GM10248 (cell line): ENCODE measurements at regions of chr12 and their contacts with region 1.

Region 1: GRCh38 chr12:67355578-67356379 is 86.6 kb downstream of the CAND1 start:
- DNase-seq: peak; percentile 28
- CTCF ChIP-seq: peak; percentile 39

Region 2: DNA sequence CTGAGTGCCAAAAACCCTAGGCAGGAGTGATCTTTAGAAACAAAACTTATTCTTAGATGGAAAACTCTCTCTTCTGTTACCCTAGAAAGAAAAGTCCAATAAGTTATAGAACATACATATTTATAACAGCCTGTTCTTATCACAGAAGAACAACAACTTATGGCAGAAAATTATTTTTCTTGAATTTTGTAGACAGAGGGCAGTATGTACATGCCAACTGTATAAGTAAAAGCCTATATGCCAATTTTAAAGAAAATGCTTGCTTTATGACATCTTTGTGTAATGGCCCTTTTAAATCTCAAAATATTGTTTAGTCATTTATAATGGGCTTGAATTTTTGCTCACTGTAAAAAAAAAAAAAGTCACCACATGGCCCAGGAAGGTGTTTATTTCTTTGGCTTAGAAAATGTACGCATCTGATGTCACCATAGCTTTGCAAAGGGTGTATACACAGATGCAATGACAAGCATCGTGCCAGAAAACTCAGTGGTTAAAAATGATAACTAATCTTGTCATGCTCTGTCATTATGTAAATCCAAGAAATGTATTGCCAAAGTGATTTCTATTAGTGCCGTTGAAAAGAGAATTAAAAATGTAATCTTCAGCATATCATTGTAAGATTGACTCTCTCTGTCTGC is 638.6 kb before region 1 on chr12:
- CTCF ChIA-PET with region 1: no interaction called
- POLR2A ChIA-PET with region 1: no interaction called
- DNase-seq: no peak
- CTCF ChIP-seq: no peak

Region 3: GRCh38 chr12:67413578-67413977 is 57.8 kb after region 1 on chr12:
- CTCF ChIA-PET with region 1: interaction called, 10 read pairs
- POLR2A ChIA-PET with region 1: no interaction called
- DNase-seq: no peak
- CTCF ChIP-seq: no peak

Region 4: GRCh38 chr12:67441736-67442346 is 86.1 kb after region 1 on chr12:
- CTCF ChIA-PET with region 1: interaction called, 12 read pairs
- POLR2A ChIA-PET with region 1: no interaction called
- DNase-seq: peak; percentile 63
- CTCF ChIP-seq: peak; percentile 70

Region 5: DNA sequence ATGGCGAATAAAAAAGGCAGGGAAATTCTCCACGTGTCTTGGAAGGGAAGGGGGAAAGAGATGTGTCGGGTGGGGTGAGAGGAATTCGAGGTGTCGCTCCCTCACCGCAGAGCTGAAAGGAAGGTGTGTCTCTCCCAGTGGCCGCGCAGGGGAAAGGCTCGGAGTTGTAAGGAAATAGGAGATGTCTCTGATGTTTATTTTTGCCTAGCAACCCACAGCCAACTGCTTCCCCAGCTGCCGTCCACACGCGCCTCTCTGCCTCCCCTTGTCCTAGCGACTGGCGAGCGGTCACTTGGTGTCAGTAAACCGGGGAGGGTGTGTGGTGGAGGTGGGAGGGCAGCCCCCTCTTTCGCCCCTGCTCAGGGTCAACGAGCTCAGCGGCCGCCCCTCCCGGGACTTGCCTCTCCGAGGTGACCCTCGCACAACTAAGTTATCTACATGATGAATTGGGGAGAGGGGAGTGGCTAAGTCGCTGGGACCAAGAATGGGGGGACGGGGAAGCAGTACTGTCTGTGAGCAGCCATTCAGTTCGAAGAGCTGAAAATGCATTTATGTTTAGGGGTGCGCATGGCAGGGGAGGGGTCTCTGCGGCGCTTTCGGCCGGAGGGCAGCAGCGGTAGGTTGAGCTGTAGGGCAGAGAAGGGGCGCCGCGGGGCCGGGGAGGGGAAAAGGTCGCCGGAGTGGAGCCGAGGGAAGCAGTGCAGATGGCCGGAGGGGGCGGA is 292.2 kb after region 1 on chr12:
- CTCF ChIA-PET with region 1: no interaction called
- POLR2A ChIA-PET with region 1: interaction called, 10 read pairs
- DNase-seq: peak; percentile 48
- CTCF ChIP-seq: no peak

Region 6: DNA sequence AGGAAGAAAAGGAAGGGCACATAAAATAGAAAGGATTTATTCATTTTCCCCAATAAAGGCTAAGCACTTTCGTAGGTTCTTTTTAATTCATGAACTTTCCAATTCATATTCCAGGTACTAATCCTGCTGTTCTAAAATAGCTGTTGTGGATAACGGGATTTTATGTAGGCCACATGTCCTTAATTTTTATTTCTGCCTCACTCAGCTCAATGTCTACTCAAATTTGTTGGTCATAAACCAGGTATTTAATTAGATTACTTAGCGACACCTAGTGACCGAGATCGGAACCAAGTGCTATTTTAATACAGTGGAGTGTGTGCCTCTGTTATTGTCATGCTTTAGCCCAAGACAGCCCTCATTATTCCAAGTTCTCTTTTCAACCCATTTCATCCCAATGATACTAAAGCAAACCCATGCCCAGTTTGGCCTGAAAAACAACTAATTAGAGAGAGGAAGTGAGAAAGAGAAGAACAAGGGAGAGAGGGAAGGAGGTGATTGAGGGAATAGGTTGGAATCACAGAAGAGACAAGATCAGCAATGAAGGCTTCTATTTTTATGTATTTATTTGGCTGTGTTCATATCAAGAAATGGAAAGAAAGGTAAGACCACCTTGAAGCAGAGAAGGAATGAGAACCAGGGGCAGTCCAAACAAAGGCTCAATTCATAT is 587.6 kb after region 1 on chr12:
- CTCF ChIA-PET with region 1: interaction called, 92 read pairs
- POLR2A ChIA-PET with region 1: interaction called, 3 read pairs
- DNase-seq: peak; percentile 41
- CTCF ChIP-seq: peak; percentile 76